Activated CD4-positive, alpha-beta T cell treated with anti-CD3 and anti-CD28 coated beads for 36 hours (primary cell): ENCODE measurements at regions of chr2 and their contacts with region 1.

Region 1: DNA sequence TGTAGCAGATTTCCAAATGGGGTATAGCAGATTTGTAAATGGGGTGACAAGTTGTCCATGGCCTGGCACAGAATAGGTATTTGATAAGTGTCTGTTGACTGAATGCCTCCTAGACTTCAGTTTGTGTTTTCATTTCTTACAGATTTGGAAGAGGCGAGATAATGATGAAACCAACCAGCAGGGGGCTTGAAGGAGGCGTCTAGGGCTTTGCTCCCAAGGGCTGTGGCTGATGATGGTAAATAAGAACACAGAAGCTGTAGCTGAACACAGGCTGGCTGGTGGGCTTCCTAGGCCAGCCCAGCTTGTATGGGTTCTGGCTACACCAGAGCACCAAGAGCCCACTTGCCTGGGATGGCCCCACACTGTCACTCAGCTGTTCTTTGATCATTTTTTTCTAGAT is 19.4 kb downstream of the SFTPB start:
- DNase-seq: peak; percentile 35
- ATAC-seq: peak; percentile 36
- H3K4me3 Mint-ChIP-seq: no peak overlapping the region
- H3K27ac Mint-ChIP-seq: peak overlapping the region; percentile 65
- H3K4me1 Mint-ChIP-seq: no peaks in the 10 kb centered on the region
- H3K27me3 Mint-ChIP-seq: no peaks in the 10 kb centered on the region

Region 2: GRCh38 chr2:86185517-86186212 is 537.0 kb after region 1 on chr2:
- CTCF ChIA-PET with region 1: no interaction called
- POLR2A ChIA-PET with region 1: interaction called, 11 read pairs
- intact Hi-C with region 1: no loop called
- DNase-seq: no peak
- ATAC-seq: peak; percentile 53
- H3K4me3 Mint-ChIP-seq: peak overlapping the region; percentile 61
- H3K27ac Mint-ChIP-seq: peak overlapping the region; percentile 94
- H3K4me1 Mint-ChIP-seq: peaks cover 73% of the 10 kb centered on the region
- H3K27me3 Mint-ChIP-seq: no peaks in the 10 kb centered on the region